ENCODE measurements at regions of chr17 and their contacts with region 1.

Region 1: GRCh38 chr17:69235338-69235930 is 6.8 kb upstream of the ABCA10 start:
- DNase-seq: peak; percentile 68 to 82 (median 80)
- ATAC-seq: peak; percentile 79 to 95 (median 93)
- H3K4me3 ChIP-seq: no peak overlapping the region
- H3K27ac ChIP-seq: peak overlapping the region in 1 of 12 donors; percentile 9
- H3K4me1 ChIP-seq: peaks cover 0 to 7% (median 0%) of the 10 kb centered on the region in 12 donors
- H3K27me3 ChIP-seq: no peaks in the 10 kb centered on the region
- CTCF ChIP-seq: peak; percentile 63 to 85 (median 76)
- POLR2A ChIP-seq: no peak

Region 2: DNA sequence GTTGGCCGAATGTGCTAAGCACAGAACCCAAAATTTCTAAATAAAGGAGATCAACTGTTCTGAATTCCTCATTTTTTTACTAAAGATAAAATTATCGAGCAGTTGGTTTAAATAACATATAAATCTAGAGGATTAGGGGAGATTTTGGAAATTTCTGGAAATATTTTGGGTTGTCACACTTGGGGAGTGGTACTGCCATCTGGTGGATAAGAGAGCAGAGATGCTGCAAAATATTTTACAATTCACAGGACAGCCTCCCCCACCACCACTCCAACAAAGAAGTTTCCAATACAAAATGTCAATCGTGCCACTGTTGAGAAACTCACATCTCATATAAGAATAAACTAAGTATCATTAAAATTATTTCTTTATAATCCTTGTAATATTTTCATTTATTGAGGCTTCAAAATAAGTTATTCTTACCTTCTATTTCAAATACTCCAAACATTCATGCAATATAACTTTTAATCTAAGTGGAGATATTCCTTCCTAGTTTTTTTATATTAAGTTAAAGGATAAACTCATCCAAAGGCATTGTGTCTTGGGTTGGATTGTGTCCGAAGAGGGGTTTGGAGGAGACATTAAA is 263.2 kb before region 1 on chr17:
- intact Hi-C with region 1: loop called in 1 of 10 experiments (anchors 10 kb)
- DNase-seq: no peak
- ATAC-seq: peak in 1 of 4 donors; percentile 60
- H3K4me3 ChIP-seq: no peak overlapping the region
- H3K27ac ChIP-seq: peak overlapping the region in 2 of 12 donors; percentile 6 to 53
- H3K4me1 ChIP-seq: peaks cover 0 to 5% (median 0%) of the 10 kb centered on the region in 12 donors
- H3K27me3 ChIP-seq: no peaks in the 10 kb centered on the region
- CTCF ChIP-seq: peak; percentile 39 to 72 (median 56)
- POLR2A ChIP-seq: no peak

Region 3: GRCh38 chr17:69188065-69188464 is 47.4 kb before region 1 on chr17:
- intact Hi-C with region 1: no loop called
- DNase-seq: no peak
- ATAC-seq: no peak
- H3K4me3 ChIP-seq: no peak overlapping the region
- H3K27ac ChIP-seq: no peak overlapping the region
- H3K4me1 ChIP-seq: no peaks in the 10 kb centered on the region
- H3K27me3 ChIP-seq: no peaks in the 10 kb centered on the region
- CTCF ChIP-seq: no peak
- POLR2A ChIP-seq: no peak

Region 4: DNA sequence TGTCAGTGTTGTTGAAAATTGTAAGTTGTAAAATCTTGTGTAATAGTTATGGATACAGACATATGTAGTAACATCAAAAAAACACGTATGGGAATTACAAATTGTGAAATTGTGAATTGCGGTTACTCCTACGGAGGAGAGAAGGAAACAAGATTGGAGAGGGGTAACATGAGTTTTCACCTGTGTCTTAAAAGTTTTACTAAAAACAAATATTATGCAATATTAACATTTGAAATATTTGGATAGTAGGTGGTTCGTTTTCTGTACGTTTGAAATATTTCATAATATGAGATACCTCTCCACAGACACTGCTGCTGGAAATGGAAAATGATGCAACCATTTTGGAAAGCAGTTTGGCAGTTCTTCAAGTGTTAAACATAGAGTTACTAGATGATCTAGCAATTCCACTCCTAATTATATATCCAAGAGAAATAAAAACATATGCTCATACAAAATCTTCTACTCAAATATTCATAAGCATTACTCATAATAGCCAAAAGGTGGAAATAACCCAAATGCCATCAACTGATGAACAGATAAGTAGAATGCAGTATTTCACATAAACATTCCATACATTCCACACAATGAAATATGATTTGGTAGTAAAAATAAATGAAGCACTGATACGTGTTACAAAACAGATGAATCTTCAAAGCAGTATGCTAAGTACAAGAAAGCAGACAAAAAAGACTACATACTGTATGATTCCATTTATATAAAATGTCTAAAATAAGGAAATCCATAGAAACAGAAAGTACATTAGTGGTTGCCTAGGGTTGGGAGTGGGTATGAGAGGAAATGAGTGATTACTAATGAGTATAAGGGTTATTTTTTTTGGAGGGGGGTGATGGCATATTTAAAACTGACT is 33.9 kb after region 1 on chr17:
- intact Hi-C with region 1: no loop called
- DNase-seq: no peak
- ATAC-seq: peak in 1 of 4 donors; percentile 57
- H3K4me3 ChIP-seq: no peak overlapping the region
- H3K27ac ChIP-seq: no peak overlapping the region
- H3K4me1 ChIP-seq: peaks cover 0 to 4% (median 0%) of the 10 kb centered on the region in 12 donors
- H3K27me3 ChIP-seq: no peaks in the 10 kb centered on the region
- CTCF ChIP-seq: no peak
- POLR2A ChIP-seq: no peak

Measured in heart left ventricle (tissue), 16 donors.